Sigmoid colon (tissue), 7 donors: ENCODE measurements at regions of chr6 and their contacts with region 1.

Region 1: DNA sequence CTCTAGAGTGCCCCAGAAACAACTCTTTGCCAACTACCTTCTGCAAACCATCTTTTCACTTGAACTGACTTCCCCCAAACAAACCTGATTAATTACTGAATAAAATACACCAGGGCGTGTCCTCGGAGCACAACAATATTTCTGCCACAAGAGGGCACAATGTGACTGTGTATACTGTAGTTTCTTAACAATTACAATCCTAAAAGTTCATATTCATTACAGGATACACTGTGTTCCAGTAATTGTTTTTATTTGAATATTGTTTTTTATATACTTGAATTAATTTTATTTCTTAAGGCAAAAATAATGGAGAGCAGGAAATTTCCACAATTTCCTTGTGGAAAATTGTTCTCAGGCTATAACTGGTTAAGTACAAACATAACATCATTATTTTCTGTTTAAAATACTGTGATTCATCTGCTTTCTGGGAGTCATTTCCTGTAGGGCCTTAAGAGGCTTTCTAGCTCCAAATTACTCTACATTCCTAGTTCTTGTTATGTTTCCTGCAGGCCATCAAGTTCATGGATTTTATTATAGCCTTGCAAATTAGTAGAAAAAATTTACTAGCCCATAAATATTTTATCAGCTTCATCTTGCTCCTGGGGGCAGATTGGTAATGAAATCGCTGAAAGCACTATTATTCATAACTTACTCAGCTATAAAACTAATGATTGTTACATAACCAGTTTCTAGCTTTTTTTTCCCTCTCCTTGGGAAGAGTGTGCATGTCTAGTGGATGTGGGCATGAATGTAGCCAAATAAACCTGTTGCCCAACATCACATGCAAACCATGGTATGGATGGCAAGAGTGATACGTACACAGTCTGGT is 51.9 kb upstream of the SLC22A16 start:
- DNase-seq: no peak
- H3K4me3 ChIP-seq: no peak overlapping the region
- H3K27ac ChIP-seq: peak overlapping the region in 2 of 4 donors; percentile 1 to 18
- H3K4me1 ChIP-seq: peaks cover 0 to 9% (median 1%) of the 10 kb centered on the region in 4 donors
- H3K27me3 ChIP-seq: no peaks in the 10 kb centered on the region
- CTCF ChIP-seq: peak; percentile 41 to 72 (median 64)
- EP300 ChIP-seq: no peak
- POLR2A ChIP-seq: no peak

Region 2: GRCh38 chr6:110738899-110739365 is 210.6 kb after region 1 on chr6:
- intact Hi-C with region 1: no loop called
- DNase-seq: no peak
- H3K4me3 ChIP-seq: no peak overlapping the region
- H3K27ac ChIP-seq: no peak overlapping the region
- H3K4me1 ChIP-seq: no peaks in the 10 kb centered on the region
- H3K27me3 ChIP-seq: no peaks in the 10 kb centered on the region
- CTCF ChIP-seq: no peak
- EP300 ChIP-seq: no peak
- POLR2A ChIP-seq: no peak

Region 3: GRCh38 chr6:110949679-110950285 is 421.5 kb after region 1 on chr6:
- intact Hi-C with region 1: loop called (anchors 2 kb)
- DNase-seq: no peak
- H3K4me3 ChIP-seq: no peak overlapping the region
- H3K27ac ChIP-seq: no peak overlapping the region
- H3K4me1 ChIP-seq: peaks cover 0 to 14% (median 7%) of the 10 kb centered on the region in 4 donors
- H3K27me3 ChIP-seq: no peaks in the 10 kb centered on the region
- CTCF ChIP-seq: peak in 3 of 4 experiments; percentile 20 to 54 (median 41)
- EP300 ChIP-seq: no peak
- POLR2A ChIP-seq: no peak

Region 4: DNA sequence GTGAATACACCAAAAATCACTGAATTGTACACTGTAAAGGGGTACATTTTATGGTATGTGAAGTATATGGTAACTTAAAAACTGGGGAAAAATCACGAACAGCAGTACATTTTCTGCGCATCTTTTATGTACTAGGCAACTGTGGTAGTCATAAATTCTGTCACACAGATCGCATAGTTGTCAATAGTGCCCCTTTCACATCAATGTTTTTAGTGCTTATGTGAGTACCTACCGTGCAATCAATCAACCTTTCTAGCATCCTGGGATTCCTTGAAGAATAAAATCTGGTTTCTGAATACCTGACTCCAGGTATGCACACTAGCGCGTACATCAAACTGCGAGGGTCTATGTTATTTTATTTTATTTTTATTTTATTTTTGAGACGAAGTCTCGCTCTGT is 452.9 kb after region 1 on chr6:
- intact Hi-C with region 1: loop called (anchors 10 kb)
- DNase-seq: no peak
- H3K4me3 ChIP-seq: peak overlapping the region; percentile 78 to 94 (median 86)
- H3K27ac ChIP-seq: peak overlapping the region; percentile 86 to 93 (median 88)
- H3K4me1 ChIP-seq: peaks cover 0 to 12% (median 10%) of the 10 kb centered on the region in 4 donors
- H3K27me3 ChIP-seq: no peaks in the 10 kb centered on the region
- CTCF ChIP-seq: no peak
- EP300 ChIP-seq: no peak
- POLR2A ChIP-seq: no peak

Region 5: GRCh38 chr6:111199935-111200334 is 671.6 kb after region 1 on chr6:
- intact Hi-C with region 1: loop called (anchors 10 kb)
- DNase-seq: no peak
- H3K4me3 ChIP-seq: no peak overlapping the region
- H3K27ac ChIP-seq: no peak overlapping the region
- H3K4me1 ChIP-seq: no peaks in the 10 kb centered on the region
- H3K27me3 ChIP-seq: no peaks in the 10 kb centered on the region
- CTCF ChIP-seq: no peak
- EP300 ChIP-seq: no peak
- POLR2A ChIP-seq: no peak